GM12878 (cell line): ENCODE measurements at regions of chr11 and their contacts with region 1.

Region 1: DNA sequence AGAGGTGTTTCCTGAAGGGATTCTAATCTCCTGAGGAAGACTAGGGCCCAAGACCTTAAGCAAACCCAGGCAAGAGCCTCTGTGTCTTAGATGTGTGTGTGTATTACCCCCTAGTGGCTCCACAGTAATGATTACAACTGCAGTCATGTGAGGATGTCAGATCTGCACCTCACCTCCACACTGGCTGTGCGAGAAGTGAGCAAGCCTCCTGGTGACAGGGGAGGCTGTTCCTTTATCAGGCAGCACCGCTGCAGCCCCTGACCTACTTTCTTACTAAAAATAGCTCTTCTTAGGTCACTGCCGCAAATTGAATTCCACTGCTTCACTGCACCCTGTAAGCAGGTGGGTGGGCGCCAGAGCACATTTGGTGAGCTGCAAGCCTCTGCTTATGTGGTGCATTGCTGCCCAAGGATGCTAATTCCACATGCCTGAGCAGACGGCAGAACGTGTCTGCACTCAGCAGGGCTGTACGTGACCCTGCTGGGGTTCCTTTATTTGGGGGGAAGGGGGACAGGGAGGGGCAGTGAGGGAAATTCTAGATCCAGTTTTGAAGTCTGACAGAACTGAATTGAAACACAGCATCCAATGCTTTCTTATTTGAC is 112.4 kb downstream of the KCNC1 start:
- DNase-seq: no peak
- ATAC-seq: peak; percentile 18; the same call in 1 of the 3 replicates
- H3K4me3 ChIP-seq: no peak overlapping the region
- H3K27ac ChIP-seq: no peak overlapping the region
- H3K4me1 ChIP-seq: no peaks in the 10 kb centered on the region
- H3K27me3 ChIP-seq: no peaks in the 10 kb centered on the region
- CTCF ChIP-seq: no peak
- EP300 ChIP-seq: no peak
- POLR2A ChIP-seq: no peak
- RAD21 ChIP-seq: 0 out of 2 replicates have a peak, but pooled peaks have one; percentile 12

Region 2: GRCh38 chr11:17864478-17864941 is 17.6 kb after region 1 on chr11:
- CTCF ChIA-PET with region 1: interaction called, 31 read pairs
- POLR2A ChIA-PET with region 1: no interaction called
- RAD21 ChIA-PET with region 1: no interaction called
- SMC1A ChIA-PET with region 1: interaction called, 4 read pairs
- in situ Hi-C with region 1: no loop called
- intact Hi-C with region 1: no loop called
- DNase-seq: no peak
- ATAC-seq: peak; percentile 81
- H3K4me3 ChIP-seq: no peak overlapping the region
- H3K27ac ChIP-seq: no peak overlapping the region
- H3K4me1 ChIP-seq: no peaks in the 10 kb centered on the region
- H3K27me3 ChIP-seq: no peaks in the 10 kb centered on the region
- CTCF ChIP-seq: peak; percentile 53 to 81 (median 65)
- EP300 ChIP-seq: no peak
- POLR2A ChIP-seq: no peak
- RAD21 ChIP-seq: no peak

Region 3: GRCh38 chr11:17894929-17895658 is 48.1 kb after region 1 on chr11:
- CTCF ChIA-PET with region 1: no interaction called
- POLR2A ChIA-PET with region 1: no interaction called
- RAD21 ChIA-PET with region 1: no interaction called
- SMC1A ChIA-PET with region 1: no interaction called
- in situ Hi-C with region 1: no loop called
- intact Hi-C with region 1: no loop called
- DNase-seq: no peak
- ATAC-seq: no peak
- H3K4me3 ChIP-seq: no peak overlapping the region
- H3K27ac ChIP-seq: no peak overlapping the region
- H3K4me1 ChIP-seq: no peaks in the 10 kb centered on the region
- H3K27me3 ChIP-seq: no peaks in the 10 kb centered on the region
- CTCF ChIP-seq: no peak
- EP300 ChIP-seq: no peak
- POLR2A ChIP-seq: no peak
- RAD21 ChIP-seq: no peak